ENCODE measurements at regions of chr5 and their contacts with region 1.

Region 1: DNA sequence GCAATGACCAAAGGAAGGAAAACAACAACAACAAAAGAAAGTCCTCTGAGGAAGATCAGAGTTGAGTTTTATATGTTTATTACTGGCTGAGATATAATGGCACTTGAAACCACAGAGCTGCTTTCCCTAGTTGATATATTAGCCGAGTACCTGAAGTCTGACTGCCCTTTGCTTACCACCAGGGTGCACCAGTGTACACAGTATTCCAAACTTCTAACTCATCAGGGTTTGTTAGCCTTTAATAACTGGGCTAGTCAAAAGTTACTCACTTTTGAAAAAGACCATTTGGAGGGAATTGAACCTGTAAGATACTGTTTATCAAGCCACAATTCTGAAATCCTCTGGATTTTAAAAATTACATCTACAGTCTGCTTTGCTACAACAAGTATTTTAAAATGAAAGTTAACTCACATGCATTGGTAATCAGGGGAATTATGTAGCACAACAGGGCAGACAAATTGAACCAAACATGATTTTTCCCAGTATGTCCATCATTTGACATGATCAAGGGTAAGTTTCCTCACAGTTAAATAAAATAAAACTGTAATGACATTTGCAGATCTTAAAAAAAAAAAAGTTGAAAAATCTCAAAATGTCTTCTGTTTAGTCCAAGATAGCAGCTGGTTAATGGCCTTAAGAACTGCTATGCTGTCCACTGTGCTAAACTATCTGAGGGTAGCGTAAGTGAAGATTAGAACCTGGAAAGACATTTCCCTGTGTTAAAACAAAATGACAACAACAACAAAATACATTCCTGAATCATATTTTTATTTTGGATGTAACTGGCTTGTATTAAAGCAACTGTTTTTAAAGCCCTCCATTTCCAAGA is 57.3 kb upstream of the C6 start:
- DNase-seq: peak in 1 of 2 donors; percentile 71
- ATAC-seq: peak; percentile 82 to 94 (median 93)
- H3K4me3 ChIP-seq: no peak overlapping the region
- H3K27ac ChIP-seq: peak overlapping the region in 4 of 10 donors; percentile 28 to 45 (median 36)
- H3K4me1 ChIP-seq: peaks cover 0 to 21% (median 4%) of the 10 kb centered on the region in 9 donors
- H3K27me3 ChIP-seq: no peaks in the 10 kb centered on the region
- CTCF ChIP-seq: peak; percentile 39 to 83 (median 73)

Region 2: DNA sequence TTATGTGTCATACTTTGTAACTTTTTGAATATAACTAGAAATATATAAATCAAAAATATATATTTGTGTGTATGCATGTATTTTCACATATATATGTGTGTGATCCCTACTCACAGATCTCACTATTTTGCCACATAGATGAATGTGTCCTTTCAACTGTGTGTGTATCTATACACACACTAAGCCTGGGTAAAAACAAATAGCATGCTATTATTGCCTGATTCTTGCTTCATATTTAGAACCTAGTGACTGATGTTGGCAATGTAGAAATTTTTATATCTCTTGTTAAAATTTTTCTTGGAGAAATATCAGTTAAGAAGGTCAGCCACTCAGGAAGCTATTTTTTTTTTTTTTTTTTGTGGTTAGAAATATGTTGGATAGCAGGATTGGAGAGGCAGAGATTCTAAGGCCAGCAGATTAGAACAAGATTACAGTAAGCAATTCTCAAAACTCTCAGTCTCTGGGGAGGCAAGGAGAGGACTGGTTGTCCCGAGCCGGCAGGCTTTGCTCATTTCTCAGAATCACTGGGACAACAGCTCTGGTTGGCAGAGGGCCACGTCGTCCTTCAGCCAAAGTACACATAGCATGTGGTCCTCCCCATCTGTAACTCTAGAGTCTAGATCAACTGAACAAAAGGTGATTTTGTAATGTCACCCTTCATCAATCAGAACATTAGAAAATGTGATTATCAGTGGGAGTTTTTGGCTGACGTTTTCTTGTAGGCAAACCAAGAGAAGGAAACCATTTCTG is 77.0 kb before region 1 on chr5:
- intact Hi-C with region 1: loop called in 2 of 10 experiments (anchors 2 to 10 kb)
- DNase-seq: peak; percentile 97
- ATAC-seq: peak; percentile 95 to 98 (median 97)
- H3K4me3 ChIP-seq: no peak overlapping the region
- H3K27ac ChIP-seq: peak overlapping the region; percentile 50 to 84 (median 72)
- H3K4me1 ChIP-seq: peaks cover 4 to 27% (median 18%) of the 10 kb centered on the region in 9 donors
- H3K27me3 ChIP-seq: no peaks in the 10 kb centered on the region
- CTCF ChIP-seq: no peak

Region 3: DNA sequence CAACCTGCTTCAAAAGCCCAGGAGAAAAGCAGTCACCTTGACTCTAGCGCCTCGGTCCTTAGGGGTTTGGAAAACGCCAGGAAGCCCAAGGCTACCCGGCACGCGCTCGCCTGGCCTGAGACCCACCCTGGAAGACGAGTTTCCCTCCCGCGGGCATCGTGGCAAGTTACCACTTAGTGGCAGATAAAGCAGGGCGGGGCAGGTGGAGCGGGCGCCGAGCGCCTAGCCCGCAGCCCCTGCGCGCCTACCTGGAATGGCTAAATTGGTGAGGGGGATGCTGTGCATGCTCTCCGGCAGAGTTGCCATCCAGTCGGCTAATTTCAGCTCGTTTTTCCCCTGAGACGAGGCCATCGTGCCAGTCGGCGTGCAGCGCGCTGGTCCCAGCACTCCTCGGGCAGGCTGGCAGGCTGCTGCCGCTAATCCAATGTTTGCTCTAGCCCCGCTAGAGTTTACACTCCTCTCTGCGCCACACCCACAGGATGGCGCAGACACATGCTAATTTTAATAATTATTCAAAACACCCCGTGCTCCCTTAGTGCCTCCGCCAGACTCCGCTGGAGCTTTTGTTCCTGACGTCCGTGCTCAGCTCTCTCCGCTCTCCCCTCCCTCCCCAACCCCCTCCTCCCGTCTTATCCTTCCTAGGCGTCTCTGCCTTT is 239.7 kb after region 1 on chr5 and contains the start of gene PLCXD3:
- intact Hi-C with region 1: loop called in 4 of 10 experiments (anchors 5 kb)
- DNase-seq: peak; percentile 45
- ATAC-seq: peak; percentile 87 to 96 (median 94)
- H3K4me3 ChIP-seq: peak within 1 kb of the TSS; percentile 62 to 78 (median 72)
- H3K27ac ChIP-seq: peak within 1 kb of the TSS; percentile 62 to 88 (median 80)
- H3K4me1 ChIP-seq: peaks cover 3 to 32% (median 15%) of the 10 kb centered on the region in 9 donors
- H3K27me3 ChIP-seq: peaks cover 0 to 16% (median 0%) of the 10 kb centered on the region in 7 donors
- CTCF ChIP-seq: no peak
- total RNA-seq, gene PLCXD3: 36.2 to 104 (median 55.5) TPM

Region 4: DNA sequence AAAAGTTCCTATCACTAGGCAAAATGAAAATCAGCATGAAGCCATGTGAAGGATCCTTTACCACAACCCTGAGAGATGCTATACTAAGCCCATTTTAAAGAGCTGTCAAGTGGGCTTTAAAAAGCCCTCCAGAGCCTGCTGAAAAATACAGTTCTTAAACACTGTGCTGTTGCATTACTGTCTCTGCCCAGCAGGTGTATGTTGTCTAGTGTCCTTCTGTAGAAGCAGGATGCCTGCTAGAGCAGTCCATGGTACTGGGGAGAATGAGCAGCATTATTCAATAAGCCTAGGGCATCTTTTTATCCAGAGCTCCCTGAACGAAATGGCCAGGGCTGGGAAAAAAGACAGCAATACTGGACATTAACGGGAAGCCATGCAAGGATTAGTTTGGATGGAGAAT is 366.0 kb after region 1 on chr5:
- intact Hi-C with region 1: loop called in 7 of 10 experiments (anchors 5 to 10 kb)
- DNase-seq: no peak
- ATAC-seq: no peak
- H3K4me3 ChIP-seq: no peak overlapping the region
- H3K27ac ChIP-seq: no peak overlapping the region
- H3K4me1 ChIP-seq: no peaks in the 10 kb centered on the region
- H3K27me3 ChIP-seq: no peaks in the 10 kb centered on the region
- CTCF ChIP-seq: peak in 4 of 9 donors; percentile 15 to 40 (median 20)

Region 5: DNA sequence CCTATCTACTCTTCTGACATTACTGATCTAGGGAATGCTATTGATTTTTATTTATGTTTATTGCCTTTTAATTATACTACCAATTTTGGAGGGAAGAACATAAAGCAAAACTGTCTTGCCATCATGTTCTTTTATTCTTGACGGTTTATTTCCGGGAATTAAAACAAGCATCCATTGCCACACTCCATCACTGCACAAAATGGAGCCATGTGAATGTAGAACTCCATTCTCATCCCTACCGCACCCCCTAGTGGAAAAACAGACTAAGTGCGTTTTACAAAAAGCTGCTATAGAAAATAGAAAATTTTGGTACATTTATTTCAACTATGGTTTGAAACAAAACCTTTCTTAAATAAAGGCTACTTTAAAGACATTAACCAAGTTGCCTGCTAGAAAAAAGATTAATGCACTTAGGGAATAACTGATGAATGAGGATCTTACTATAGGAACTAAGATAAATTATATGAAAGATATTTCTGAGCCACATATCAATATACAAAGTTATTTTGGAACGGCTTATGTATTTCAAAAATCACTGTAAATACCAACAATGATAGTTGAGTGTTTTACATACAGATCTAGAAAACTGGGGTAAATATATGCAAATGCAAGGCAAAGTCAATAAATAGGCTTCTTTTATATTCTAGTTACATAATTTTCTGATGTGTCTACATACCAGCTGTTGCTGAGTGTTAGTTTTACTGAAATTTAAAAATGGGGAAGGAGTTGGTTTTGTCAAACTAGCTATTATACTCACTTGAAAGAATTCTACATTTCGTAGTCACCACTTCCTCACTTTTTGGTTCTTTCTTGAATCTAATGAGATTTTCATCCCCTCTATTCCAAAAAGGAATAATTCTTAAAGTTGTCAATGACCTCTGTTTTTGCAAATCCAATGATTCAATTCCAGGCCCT is 573.1 kb after region 1 on chr5:
- intact Hi-C with region 1: loop called in 5 of 10 experiments (anchors 2 to 10 kb)
- DNase-seq: peak in 1 of 2 donors; percentile 51
- ATAC-seq: peak in 6 of 8 donors; percentile 49 to 77 (median 70)
- H3K4me3 ChIP-seq: no peak overlapping the region
- H3K27ac ChIP-seq: no peak overlapping the region
- H3K4me1 ChIP-seq: peaks cover 0 to 11% (median 0%) of the 10 kb centered on the region in 9 donors
- H3K27me3 ChIP-seq: no peaks in the 10 kb centered on the region
- CTCF ChIP-seq: peak; percentile 56 to 87 (median 79)